ENCODE measurements at regions of chrX and their contacts with region 1.

Region 1: DNA sequence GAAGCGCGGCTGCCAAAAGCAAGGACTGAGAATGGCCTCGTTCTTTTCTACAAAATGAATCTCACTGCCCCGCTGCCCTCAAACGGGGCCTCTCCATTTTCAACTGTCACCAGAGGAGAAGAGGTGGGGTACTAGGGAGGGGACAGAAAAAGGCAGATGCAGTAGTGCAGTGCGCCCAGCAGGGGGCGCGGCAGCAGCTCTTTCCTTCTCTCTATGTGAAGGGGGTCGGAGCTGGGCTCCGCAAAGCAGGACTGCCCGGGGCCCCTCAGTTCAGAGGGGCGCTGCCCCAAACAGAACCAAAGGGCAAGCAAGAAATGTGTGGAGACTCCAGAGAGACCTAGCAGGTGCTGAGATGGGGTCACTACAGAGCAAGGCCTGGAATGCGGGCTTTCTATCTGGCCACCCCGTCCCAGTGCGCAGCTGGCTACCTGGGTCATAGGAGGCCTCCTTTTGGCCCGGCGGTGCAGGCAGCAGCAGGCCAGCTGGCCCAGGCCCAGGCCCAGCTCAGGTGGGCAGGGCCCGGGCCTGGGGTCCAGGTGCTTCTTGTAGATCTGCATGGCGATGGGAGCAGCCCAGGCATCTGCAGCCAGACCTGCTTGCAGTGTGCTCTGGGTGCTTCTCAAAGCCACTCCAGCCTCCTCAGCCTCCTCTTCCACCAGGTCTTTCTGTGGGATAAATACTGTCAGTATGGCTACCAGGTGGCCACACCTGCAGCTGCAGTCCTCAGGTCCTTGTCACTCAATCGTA is 5.9 kb downstream of the IRAK1 start:
- DNase-seq: peak; percentile 41
- H3K4me3 Mint-ChIP-seq: no peak overlapping the region
- H3K27ac Mint-ChIP-seq: peak overlapping the region; percentile 36
- H3K4me1 Mint-ChIP-seq: peaks cover 18% of the 10 kb centered on the region
- H3K27me3 Mint-ChIP-seq: no peaks in the 10 kb centered on the region

Region 2: DNA sequence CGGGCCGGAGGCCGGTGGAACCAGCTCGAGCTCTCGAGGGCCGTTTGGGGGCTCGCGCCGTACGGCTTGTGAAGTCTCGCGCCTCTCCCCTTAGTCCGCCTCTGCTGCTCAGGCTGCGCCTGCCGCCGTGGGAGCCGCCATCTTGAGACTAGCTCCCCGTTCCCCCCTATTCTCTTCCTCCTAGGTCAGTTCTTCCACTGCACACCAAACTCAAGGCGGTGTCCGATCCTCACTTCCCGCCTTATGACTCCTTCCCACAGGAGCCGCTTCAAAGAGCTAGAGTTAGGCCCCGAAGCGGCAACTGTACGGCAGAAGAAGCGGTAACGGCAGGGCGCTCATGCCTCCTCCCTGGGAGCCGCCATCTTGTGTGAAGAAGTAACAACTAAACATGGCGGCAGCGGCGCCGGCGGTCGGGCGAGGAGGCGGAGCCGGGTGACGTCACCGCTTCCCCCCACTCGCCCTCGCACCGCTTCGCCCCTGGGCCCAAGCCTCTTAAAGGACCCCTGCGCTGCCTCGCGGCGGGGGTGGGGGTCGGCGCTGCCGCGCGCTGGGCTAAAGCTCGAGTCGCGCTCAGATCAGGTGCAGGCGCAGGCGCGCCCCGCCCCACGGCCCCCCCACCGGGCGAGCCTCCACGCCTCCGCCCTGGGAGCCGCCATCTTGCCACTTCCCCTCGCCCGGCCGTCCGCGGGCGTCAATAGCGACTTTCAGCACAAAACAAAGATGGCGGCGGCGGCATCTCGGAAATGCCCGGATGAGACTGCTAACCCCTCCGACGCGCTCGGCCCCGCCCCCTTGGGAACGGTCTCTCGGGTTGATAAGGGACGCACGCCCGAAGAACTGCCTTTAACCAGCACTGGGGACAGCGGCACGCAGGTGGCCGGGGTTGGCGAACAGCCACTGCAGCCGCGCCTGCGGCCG is 42.1 kb before region 1 on chrX and contains the start of gene HCFC1:
- CTCF ChIA-PET with region 1: interaction called, 16 read pairs
- POLR2A ChIA-PET with region 1: no interaction called
- DNase-seq: peak; percentile 90
- H3K4me3 Mint-ChIP-seq: peak within 1 kb of the TSS; percentile 100
- H3K27ac Mint-ChIP-seq: peak within 1 kb of the TSS; percentile 100
- H3K4me1 Mint-ChIP-seq: peaks cover 38% of the 10 kb centered on the region
- H3K27me3 Mint-ChIP-seq: no peaks in the 10 kb centered on the region
- total RNA-seq, gene HCFC1: 116 to 121 TPM

Region 3: DNA sequence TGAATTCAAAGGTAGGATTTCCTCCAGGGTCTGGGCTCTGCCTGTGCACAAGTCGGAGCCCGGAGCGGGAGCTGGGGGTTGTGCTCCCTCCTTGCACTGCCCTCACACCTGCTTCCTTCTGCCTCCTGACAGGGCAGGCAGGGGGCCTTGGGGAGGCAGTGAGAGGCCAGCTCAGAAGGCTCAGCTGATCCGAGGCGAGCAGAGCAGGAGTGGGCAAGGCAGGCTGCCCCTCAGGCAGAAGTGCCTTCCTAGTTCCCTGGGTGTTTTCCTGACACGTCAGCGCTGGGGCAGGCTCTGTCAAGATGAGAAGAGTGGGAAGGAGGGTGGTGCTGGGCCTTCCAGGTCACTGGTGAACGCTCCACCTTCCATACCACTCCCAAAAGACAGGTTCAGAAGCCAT is 11.4 kb after region 1 on chrX:
- CTCF ChIA-PET with region 1: interaction called, 15 read pairs
- POLR2A ChIA-PET with region 1: no interaction called
- DNase-seq: no peak
- H3K4me3 Mint-ChIP-seq: no peak overlapping the region
- H3K27ac Mint-ChIP-seq: no peak overlapping the region
- H3K4me1 Mint-ChIP-seq: peaks cover 26% of the 10 kb centered on the region
- H3K27me3 Mint-ChIP-seq: no peaks in the 10 kb centered on the region

Measured in activated CD4-positive, alpha-beta T cell treated with anti-CD3 and anti-CD28 coated beads, Interleukin-2, amount 10 ng/mL, durations not matched to agents 7 days and 5 days (primary cell).